Calu3 (cell line): ENCODE measurements at regions of chr14 and their contacts with region 1.

Region 1: GRCh38 chr14:52961060-52961639 is 10.3 kb upstream of the FERMT2 start:
- DNase-seq: peak; percentile 68
- H3K4me3 Mint-ChIP-seq: no peak overlapping the region
- H3K27ac Mint-ChIP-seq: no peak overlapping the region
- H3K4me1 Mint-ChIP-seq: peaks cover 18% of the 10 kb centered on the region
- H3K27me3 Mint-ChIP-seq: no peaks in the 10 kb centered on the region
- CTCF ChIP-seq: peak; percentile 61

Region 2: DNA sequence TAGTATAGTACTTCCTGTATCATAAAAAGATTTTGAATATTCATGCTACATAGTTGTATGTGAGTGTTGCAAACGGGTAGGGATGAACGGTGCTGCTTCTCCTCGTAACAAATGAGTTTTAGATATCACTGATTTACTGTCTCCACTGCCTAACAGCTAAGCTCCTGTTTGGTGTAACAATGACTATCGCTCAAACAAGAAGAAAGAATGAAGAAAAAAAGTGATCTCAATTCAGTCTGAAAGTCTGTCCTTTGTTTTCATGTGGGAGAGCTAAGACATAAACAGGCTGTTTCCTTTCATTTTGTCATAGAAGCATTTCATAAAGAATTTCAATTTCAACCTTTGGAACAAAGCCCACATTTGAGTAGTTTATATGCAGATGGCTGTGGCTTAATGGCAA is 997.9 kb before region 1 on chr14:
- CTCF ChIA-PET with region 1: no interaction called
- intact Hi-C with region 1: no loop called
- DNase-seq: no peak
- H3K4me3 Mint-ChIP-seq: no peak overlapping the region
- H3K27ac Mint-ChIP-seq: no peak overlapping the region
- H3K4me1 Mint-ChIP-seq: no peaks in the 10 kb centered on the region
- H3K27me3 Mint-ChIP-seq: peaks cover 62% of the 10 kb centered on the region
- CTCF ChIP-seq: no peak

Region 3: GRCh38 chr14:53022593-53022992 is 61.4 kb after region 1 on chr14:
- CTCF ChIA-PET with region 1: no interaction called
- intact Hi-C with region 1: no loop called
- DNase-seq: no peak
- H3K4me3 Mint-ChIP-seq: no peak overlapping the region
- H3K27ac Mint-ChIP-seq: no peak overlapping the region
- H3K4me1 Mint-ChIP-seq: no peaks in the 10 kb centered on the region
- H3K27me3 Mint-ChIP-seq: peaks cover 16% of the 10 kb centered on the region
- CTCF ChIP-seq: no peak

Region 4: DNA sequence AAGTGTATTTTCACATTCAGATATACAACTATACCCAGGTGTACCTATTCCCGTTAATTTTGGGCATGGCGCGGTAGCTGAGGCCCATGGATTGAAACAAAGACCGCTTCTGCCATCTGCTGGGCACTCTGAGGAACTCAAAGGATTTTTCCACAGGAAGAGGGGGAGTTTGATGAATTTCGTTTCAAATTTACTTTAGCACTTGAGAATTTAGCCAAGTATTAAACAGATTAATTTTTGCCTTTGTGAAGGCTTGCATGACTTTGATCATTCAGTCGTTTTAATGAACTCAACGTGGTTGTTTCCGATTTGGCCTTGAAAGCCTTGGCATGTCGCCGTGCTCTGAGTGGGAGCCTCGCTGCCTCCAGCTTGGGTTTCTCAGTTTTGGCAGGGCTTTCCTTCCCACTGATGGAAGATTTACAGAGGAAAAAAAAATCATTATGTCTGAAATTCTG is 345.1 kb after region 1 on chr14:
- CTCF ChIA-PET with region 1: no interaction called
- intact Hi-C with region 1: loop called (anchors 10 kb)
- DNase-seq: peak; percentile 41
- H3K4me3 Mint-ChIP-seq: peak overlapping the region; percentile 47
- H3K27ac Mint-ChIP-seq: no peak overlapping the region
- H3K4me1 Mint-ChIP-seq: no peaks in the 10 kb centered on the region
- H3K27me3 Mint-ChIP-seq: peaks cover 29% of the 10 kb centered on the region
- CTCF ChIP-seq: peak; percentile 53